ENCODE measurements at regions of chr2 and their contacts with region 1.

Region 1: DNA sequence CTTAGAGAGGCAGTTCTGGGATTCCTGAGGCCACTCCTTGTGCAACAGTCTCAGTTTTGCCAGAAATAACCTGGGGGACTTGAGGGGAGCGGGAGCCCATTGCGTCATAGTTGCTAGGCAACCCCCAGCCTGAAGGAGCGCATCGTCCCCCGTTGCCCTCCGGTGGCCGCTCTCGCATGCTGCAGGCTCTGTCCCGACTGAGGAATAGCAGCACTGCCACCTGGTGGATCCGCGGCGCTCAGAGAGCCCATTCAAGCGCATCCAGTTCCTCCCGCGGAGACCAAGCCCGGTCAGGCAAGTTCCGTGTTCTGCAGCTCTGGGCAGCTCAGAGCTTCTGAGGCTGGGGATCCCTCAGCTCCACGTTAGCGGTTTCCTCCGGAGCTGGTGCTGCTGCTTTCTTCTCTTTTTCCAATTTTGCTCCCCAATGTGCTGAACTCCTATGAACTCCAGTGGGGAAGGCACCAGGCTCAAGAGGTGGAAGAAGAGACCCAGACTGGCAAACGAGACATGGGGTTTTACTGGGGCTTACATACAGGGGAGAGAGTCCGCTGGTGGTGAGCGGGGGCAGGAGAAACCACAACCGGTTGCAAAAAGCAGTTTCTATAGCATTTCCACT is 15.1 kb downstream of the SLC4A3 start:
- DNase-seq: peak; percentile 83 to 93
- H3K4me3 ChIP-seq: no peak overlapping the region
- H3K27ac ChIP-seq: no peak overlapping the region
- H3K4me1 ChIP-seq: peaks cover 18% of the 10 kb centered on the region
- H3K27me3 ChIP-seq: no peaks in the 10 kb centered on the region
- CTCF ChIP-seq: peak; percentile 93

Region 2: DNA sequence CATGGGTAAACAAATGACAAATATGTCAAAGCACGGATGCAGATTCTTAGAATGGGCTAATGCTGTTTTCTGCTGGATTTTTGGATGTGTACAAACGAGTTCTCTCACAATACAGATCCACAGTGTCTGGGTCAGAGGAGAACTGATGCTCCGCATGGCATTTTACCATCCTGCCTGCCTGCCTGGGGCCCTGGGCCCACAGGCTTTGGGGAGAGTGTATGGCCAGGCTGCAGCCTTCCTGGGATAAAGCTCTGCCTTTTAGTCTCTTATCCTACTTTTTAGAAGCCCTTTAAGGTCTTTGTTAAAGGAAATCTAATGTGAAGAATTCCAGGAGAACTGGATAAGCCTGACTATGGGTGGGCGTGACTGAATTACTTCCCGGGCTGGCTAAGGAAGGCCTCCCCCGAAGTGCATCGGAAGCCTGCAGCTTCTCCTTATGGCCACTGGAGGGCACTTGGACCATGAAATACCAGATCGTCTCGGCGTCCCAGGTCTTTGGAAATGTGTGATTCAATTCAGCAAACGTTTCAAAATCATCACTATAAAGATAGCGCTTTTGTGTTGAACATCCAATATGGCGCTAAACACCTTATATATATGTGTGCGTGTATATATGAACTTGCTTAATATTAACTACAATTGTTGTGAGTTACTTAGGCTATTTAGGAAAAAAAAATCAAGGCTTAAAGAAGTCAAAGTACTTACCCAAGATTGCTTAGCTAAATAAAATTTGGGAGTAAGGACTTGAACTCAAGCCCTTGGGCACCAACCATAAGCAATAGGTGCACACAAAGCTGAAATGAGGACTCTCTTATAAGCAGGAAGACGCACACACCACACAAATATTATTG is 239.7 kb before region 1 on chr2:
- CTCF ChIA-PET with region 1: no interaction called
- POLR2A ChIA-PET with region 1: no interaction called
- intact Hi-C with region 1: loop called (anchors 5 kb)
- DNase-seq: peak; percentile 67 to 78
- H3K4me3 ChIP-seq: no peak overlapping the region
- H3K27ac ChIP-seq: no peak overlapping the region
- H3K4me1 ChIP-seq: peaks cover 36% of the 10 kb centered on the region
- H3K27me3 ChIP-seq: no peaks in the 10 kb centered on the region
- CTCF ChIP-seq: peak; percentile 92

Region 3: GRCh38 chr2:219543601-219544358 is 98.8 kb before region 1 on chr2 and contains the starts of genes CHPF and TMEM198:
- CTCF ChIA-PET with region 1: no interaction called
- POLR2A ChIA-PET with region 1: interaction called, 6 read pairs
- intact Hi-C with region 1: loop called (anchors 1 kb)
- DNase-seq: peak; percentile 91 to 98
- H3K4me3 ChIP-seq: peak within 1 kb of the TSS; percentile 65
- H3K27ac ChIP-seq: peak within 1 kb of the TSS; percentile 55
- H3K4me1 ChIP-seq: no peaks in the 10 kb centered on the region; the same call in 1 of the 2 replicates
- H3K27me3 ChIP-seq: no peaks in the 10 kb centered on the region
- CTCF ChIP-seq: no peak
- total RNA-seq, gene CHPF: 78.2 and 89.7 TPM in 2 replicates
- total RNA-seq, gene TMEM198: 3.6 and 5.8 TPM in 2 replicates

Measured in PC-9 (cell line).